ENCODE measurements at regions of chr10 and their contacts with region 1.

Region 1: GRCh38 chr10:86376852-86377796 is 10.5 kb upstream of the GRID1 start:
- DNase-seq: peak; percentile 49 to 89 (median 78)
- ATAC-seq: peak; percentile 97
- H3K4me3 ChIP-seq: peak overlapping the region; percentile 26
- H3K4me3 Mint-ChIP-seq: no peak overlapping the region
- H3K27ac ChIP-seq: no peak overlapping the region
- H3K27ac Mint-ChIP-seq: no peak overlapping the region
- H3K4me1 ChIP-seq: peaks cover 12% of the 10 kb centered on the region
- H3K4me1 Mint-ChIP-seq: no peaks in the 10 kb centered on the region
- H3K27me3 ChIP-seq: peaks cover 20 to 47% of the 10 kb centered on the region in 2 experiments
- H3K27me3 Mint-ChIP-seq: peaks cover 66% of the 10 kb centered on the region
- CTCF ChIP-seq: peak; percentile 96

Region 2: DNA sequence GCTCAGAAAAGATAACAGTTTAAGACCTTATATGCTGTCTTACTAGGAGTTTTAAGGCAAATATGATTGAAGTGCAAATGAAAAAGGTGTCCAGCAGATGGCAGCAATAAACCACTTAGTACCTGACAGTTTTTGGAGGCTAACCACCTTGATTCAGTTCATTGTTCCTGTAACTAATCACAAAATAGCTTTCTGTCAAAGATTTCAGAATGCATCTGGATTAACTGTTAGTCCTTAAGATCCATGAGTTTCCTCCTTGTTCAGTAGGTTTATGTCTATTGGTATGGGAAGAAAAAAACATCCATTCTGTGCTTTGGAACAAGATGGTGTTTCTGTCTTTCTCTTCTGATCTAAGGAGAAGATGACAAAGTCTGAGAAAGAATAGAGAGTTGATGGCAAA is 2002.1 kb before region 1 on chr10:
- CTCF ChIA-PET with region 1: no interaction called
- POLR2A ChIA-PET with region 1: no interaction called
- intact Hi-C with region 1: loop called in 1 of 2 experiments (anchors 5 kb)
- DNase-seq: peak in 9 of 14 experiments; percentile 7 to 79 (median 31)
- ATAC-seq: peak; percentile 76
- H3K4me3 ChIP-seq: no peak overlapping the region
- H3K4me3 Mint-ChIP-seq: no peak overlapping the region
- H3K27ac ChIP-seq: no peak overlapping the region
- H3K27ac Mint-ChIP-seq: no peak overlapping the region
- H3K4me1 ChIP-seq: no peaks in the 10 kb centered on the region
- H3K4me1 Mint-ChIP-seq: peaks cover 63% of the 10 kb centered on the region
- H3K27me3 ChIP-seq: no peaks in the 10 kb centered on the region
- H3K27me3 Mint-ChIP-seq: no peaks in the 10 kb centered on the region
- CTCF ChIP-seq: peak; percentile 89

Region 3: DNA sequence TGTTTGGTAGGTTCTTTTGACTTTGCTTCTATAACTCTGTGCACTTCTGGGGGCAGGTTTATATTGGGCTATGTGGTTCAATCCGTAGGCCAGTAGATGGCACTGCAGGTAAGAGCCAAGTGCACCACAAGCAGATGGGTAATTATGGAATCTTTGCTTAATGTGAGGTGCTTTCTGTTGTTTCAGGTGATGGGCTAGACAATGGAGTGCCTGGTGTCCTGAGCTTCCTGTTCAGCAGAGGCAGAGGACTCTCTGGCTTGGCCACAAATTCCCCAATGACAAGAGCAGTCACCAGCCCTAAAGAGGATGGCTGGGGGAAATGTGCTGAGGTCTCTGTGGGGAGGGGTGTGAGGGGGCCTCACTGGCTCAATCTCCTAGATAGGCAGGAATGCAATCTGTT is 1593.7 kb before region 1 on chr10:
- CTCF ChIA-PET with region 1: no interaction called
- POLR2A ChIA-PET with region 1: no interaction called
- intact Hi-C with region 1: loop called (anchors 5 kb)
- DNase-seq: peak in 1 of 14 experiments; percentile 11
- ATAC-seq: no peak
- H3K4me3 ChIP-seq: no peak overlapping the region
- H3K4me3 Mint-ChIP-seq: no peak overlapping the region
- H3K27ac ChIP-seq: no peak overlapping the region
- H3K27ac Mint-ChIP-seq: no peak overlapping the region
- H3K4me1 ChIP-seq: no peaks in the 10 kb centered on the region
- H3K4me1 Mint-ChIP-seq: no peaks in the 10 kb centered on the region
- H3K27me3 ChIP-seq: no peaks in the 10 kb centered on the region
- H3K27me3 Mint-ChIP-seq: peaks cover 12% of the 10 kb centered on the region
- CTCF ChIP-seq: no peak

Region 4: DNA sequence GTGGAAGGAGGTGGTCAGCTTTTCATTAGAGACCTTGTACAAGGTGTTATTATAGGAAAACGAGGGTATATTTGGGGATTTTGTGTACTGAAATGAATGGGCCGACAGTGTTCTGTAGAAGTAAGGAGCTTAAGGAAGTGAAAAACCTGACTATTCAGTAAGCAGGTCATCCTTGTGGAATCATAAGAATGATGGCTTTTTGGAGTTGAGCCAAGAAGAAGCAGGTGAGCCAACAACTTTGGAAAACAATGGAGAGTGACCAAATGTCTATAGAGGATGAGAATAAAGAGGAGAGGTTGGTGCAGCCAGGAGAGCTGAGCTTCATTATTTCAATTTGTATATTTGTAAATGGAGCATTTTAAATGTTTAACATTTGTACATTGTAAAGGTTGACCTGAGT is 1453.0 kb before region 1 on chr10:
- CTCF ChIA-PET with region 1: no interaction called
- POLR2A ChIA-PET with region 1: no interaction called
- intact Hi-C with region 1: loop called in 1 of 2 experiments (anchors 2 kb)
- DNase-seq: no peak
- ATAC-seq: no peak
- H3K4me3 ChIP-seq: no peak overlapping the region
- H3K4me3 Mint-ChIP-seq: no peak overlapping the region
- H3K27ac ChIP-seq: no peak overlapping the region
- H3K27ac Mint-ChIP-seq: no peak overlapping the region
- H3K4me1 ChIP-seq: no peaks in the 10 kb centered on the region
- H3K4me1 Mint-ChIP-seq: no peaks in the 10 kb centered on the region
- H3K27me3 ChIP-seq: no peaks in the 10 kb centered on the region
- H3K27me3 Mint-ChIP-seq: no peaks in the 10 kb centered on the region
- CTCF ChIP-seq: no peak

Region 5: GRCh38 chr10:85993840-85994507 is 383.1 kb before region 1 on chr10:
- CTCF ChIA-PET with region 1: no interaction called
- POLR2A ChIA-PET with region 1: no interaction called
- intact Hi-C with region 1: loop called (anchors 5 kb)
- DNase-seq: no peak
- ATAC-seq: no peak
- H3K4me3 ChIP-seq: no peak overlapping the region
- H3K4me3 Mint-ChIP-seq: no peak overlapping the region
- H3K27ac ChIP-seq: no peak overlapping the region
- H3K27ac Mint-ChIP-seq: no peak overlapping the region
- H3K4me1 ChIP-seq: no peaks in the 10 kb centered on the region
- H3K4me1 Mint-ChIP-seq: no peaks in the 10 kb centered on the region
- H3K27me3 ChIP-seq: peaks cover 8 to 15% of the 10 kb centered on the region in 2 experiments
- H3K27me3 Mint-ChIP-seq: peaks cover 27% of the 10 kb centered on the region
- CTCF ChIP-seq: no peak

Region 6: GRCh38 chr10:86017841-86018734 is 359.0 kb before region 1 on chr10:
- CTCF ChIA-PET with region 1: no interaction called
- POLR2A ChIA-PET with region 1: no interaction called
- intact Hi-C with region 1: no loop called
- DNase-seq: no peak
- ATAC-seq: no peak
- H3K4me3 ChIP-seq: no peak overlapping the region
- H3K4me3 Mint-ChIP-seq: no peak overlapping the region
- H3K27ac ChIP-seq: no peak overlapping the region
- H3K27ac Mint-ChIP-seq: no peak overlapping the region
- H3K4me1 ChIP-seq: peaks cover 5% of the 10 kb centered on the region
- H3K4me1 Mint-ChIP-seq: peaks cover 5% of the 10 kb centered on the region
- H3K27me3 ChIP-seq: no peaks in the 10 kb centered on the region
- H3K27me3 Mint-ChIP-seq: no peaks in the 10 kb centered on the region
- CTCF ChIP-seq: no peak

Region 7: GRCh38 chr10:86366033-86366901 is 10.9 kb before region 1 on chr10 and contains the start of gene GRID1:
- CTCF ChIA-PET with region 1: no interaction called
- POLR2A ChIA-PET with region 1: no interaction called
- intact Hi-C with region 1: no loop called
- DNase-seq: peak in 4 of 14 experiments; percentile 30 to 39 (median 32)
- ATAC-seq: peak; percentile 55
- H3K4me3 ChIP-seq: no peak within 1 kb of the TSS
- H3K4me3 Mint-ChIP-seq: peak within 1 kb of the TSS; percentile 58
- H3K27ac ChIP-seq: no peak within 1 kb of the TSS
- H3K27ac Mint-ChIP-seq: no peak within 1 kb of the TSS
- H3K4me1 ChIP-seq: peaks cover 26% of the 10 kb centered on the region
- H3K4me1 Mint-ChIP-seq: peaks cover 13% of the 10 kb centered on the region
- H3K27me3 ChIP-seq: peaks cover 43 to 64% of the 10 kb centered on the region in 2 experiments
- H3K27me3 Mint-ChIP-seq: peaks cover 67% of the 10 kb centered on the region
- CTCF ChIP-seq: no peak
- total RNA-seq, gene GRID1: not detected